ENCODE measurements at regions of chr19 and their contacts with region 1.

Region 1: DNA sequence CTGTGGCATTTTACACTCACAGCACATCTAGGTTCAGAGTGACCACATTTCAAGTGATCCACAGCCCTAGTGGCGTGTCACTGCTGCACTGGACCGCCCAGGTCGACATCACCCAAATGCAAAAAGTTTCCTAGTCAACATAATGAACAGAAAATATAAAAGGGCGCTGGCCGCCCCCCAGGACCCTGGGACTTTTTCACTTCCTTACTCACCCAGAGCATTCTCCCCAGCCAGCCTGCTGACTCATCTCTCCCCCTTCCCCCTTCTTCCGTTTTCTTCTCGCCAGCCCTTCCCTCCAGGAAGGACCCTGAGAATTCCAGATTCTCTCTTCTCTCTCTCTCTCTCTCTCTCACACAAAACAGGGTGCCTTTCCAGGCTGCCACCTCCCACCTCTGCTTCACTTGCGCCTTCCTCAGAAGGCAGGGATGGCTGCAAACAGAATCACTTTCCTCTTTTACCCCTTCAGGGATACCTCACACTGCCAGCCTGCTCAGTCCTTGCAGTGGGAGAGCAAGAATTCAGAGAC is 21.0 kb upstream of the GRWD1 start:
- DNase-seq: no peak

Region 2: GRCh38 chr19:48382286-48382685 is 42.5 kb before region 1 on chr19:
- intact Hi-C with region 1: loop called in 1 of 2 experiments (anchors 1 kb)
- DNase-seq: no peak